ENCODE measurements at regions of chr5 and their contacts with region 1.

Region 1: GRCh38 chr5:134225618-134226440 is at the start of gene PPP2CA:
- DNase-seq: peak; percentile 95
- H3K4me3 ChIP-seq: peak within 1 kb of the TSS; percentile 86 to 98
- H3K27ac ChIP-seq: peak within 1 kb of the TSS; percentile 97 to 98
- H3K4me1 ChIP-seq: peaks cover 4 to 23% of the 10 kb centered on the region in 2 experiments; a peak in 3 of 4 replicates
- H3K27me3 ChIP-seq: no peaks in the 10 kb centered on the region
- CTCF ChIP-seq: no peak
- EP300 ChIP-seq: no peak; a peak in 1 of 4 replicates
- RAD21 ChIP-seq: no peak
- polyA plus RNA-seq, gene PPP2CA: 146 and 163 TPM in 2 replicates

Region 2: DNA sequence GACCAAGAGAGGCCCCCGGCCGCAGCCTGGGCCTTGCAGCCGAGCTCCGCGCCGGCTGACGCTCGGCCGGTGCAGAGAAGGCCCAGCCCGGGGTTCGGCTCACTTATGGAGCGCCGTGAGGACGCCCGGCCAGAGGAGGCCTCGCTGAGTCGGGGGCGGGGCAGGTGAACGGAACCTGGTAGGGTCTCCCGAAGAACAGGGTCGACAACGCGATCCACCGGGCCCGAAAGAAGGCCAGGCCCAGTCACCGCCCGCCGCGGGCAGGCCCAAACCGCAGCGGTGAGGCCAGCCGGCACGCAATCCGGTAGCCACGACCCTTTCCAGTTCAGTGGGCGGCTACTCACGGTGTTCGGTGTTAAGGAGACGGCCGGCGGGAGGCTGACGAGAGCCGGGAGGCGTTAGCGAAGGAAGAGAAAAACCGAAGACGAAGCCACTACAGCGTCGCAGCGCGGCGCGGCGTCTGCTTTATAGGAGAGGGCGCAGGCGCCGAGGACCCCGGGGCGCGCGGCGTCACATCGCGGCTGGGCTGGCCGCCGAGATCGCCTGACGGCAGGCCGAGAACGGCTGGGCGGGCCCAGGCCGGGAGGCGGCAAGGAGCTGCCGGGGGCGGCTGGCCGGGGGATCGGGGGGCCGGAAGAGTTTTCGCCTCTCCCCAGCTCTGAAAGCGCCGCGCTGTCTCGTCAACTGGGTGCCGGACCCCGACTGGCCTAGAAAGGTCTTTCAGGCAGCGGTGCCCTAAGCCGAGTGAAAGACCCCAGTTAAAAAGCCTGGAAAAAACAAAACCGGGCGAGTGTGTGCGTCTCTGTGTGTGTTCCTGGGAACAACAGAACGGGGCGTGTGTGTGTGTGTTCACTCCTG is 49.1 kb before region 1 on chr5 and contains the start of gene SKP1:
- CTCF ChIA-PET with region 1: no interaction called
- POLR2A ChIA-PET with region 1: interaction called, 16 read pairs
- DNase-seq: peak; percentile 94
- H3K4me3 ChIP-seq: peak within 1 kb of the TSS; percentile 77 to 84
- H3K27ac ChIP-seq: peak within 1 kb of the TSS; percentile 95 to 96
- H3K4me1 ChIP-seq: peaks cover 10 to 22% of the 10 kb centered on the region in 2 experiments; a peak in 2 of 4 replicates
- H3K27me3 ChIP-seq: no peaks in the 10 kb centered on the region
- CTCF ChIP-seq: no peak
- EP300 ChIP-seq: no peak
- RAD21 ChIP-seq: no peak
- polyA plus RNA-seq, gene SKP1: 407 and 428 TPM in 2 replicates

Region 3: GRCh38 chr5:134184155-134185135 is 41.4 kb before region 1 on chr5:
- CTCF ChIA-PET with region 1: interaction called, 12 read pairs
- POLR2A ChIA-PET with region 1: interaction called, 3 read pairs
- DNase-seq: peak; percentile 81
- H3K4me3 ChIP-seq: no peak overlapping the region
- H3K27ac ChIP-seq: no peak overlapping the region
- H3K4me1 ChIP-seq: no peaks in the 10 kb centered on the region; a peak in 1 of 4 replicates
- H3K27me3 ChIP-seq: no peaks in the 10 kb centered on the region
- CTCF ChIP-seq: peak; percentile 84
- EP300 ChIP-seq: no peak
- RAD21 ChIP-seq: peak; percentile 86

Region 4: GRCh38 chr5:134236318-134236717 is 10.5 kb after region 1 on chr5:
- CTCF ChIA-PET with region 1: interaction called, 3 read pairs
- POLR2A ChIA-PET with region 1: interaction called, 14 read pairs
- DNase-seq: no peak
- H3K4me3 ChIP-seq: no peak overlapping the region
- H3K27ac ChIP-seq: no peak overlapping the region
- H3K4me1 ChIP-seq: peaks cover 0 to 8% of the 10 kb centered on the region in 2 experiments; a peak in 1 of 4 replicates
- H3K27me3 ChIP-seq: no peaks in the 10 kb centered on the region
- CTCF ChIP-seq: no peak
- EP300 ChIP-seq: no peak
- RAD21 ChIP-seq: no peak

Measured in SK-N-SH (cell line).